ENCODE measurements at regions of chr5 and their contacts with region 1.

Region 1: DNA sequence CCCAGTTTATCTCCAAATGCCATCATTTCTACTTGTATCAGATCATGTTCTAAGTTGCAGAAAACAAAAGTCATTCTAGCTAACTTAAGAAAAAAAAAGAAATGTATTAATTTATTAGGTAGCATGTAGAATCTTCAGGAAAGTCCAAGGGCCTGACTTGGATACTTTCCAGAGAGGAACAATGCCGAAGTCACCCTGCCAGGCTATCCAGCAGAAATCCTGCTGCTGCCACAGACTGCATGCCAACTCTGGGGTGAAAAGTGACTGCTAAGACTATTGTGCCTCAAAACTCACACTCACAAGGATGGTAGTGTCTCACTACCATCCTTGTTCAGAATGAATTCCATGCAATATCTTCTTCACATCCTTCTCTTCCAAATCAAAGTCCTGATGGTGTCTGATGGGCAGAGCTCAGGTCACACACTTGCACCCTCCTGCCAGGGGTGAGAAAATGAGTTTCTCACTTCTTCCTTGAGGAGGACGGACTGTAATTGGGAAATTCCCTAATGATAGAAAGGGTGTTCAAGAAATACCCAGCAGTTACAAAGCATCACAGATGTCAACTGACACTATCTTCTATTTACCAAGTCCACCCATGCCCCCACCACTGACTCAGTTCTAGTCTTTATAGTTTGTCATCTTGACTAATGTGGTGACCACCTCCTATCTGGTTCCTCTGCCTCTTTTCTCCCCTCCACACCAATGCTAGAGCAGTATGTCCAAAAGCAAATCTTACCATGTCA is 279.4 kb downstream of the CWC27 start:
- DNase-seq: peak; percentile 71
- ATAC-seq: peak; percentile 86
- H3K4me3 ChIP-seq: no peak overlapping the region; the same call in 1 of the 2 replicates
- H3K27ac ChIP-seq: peak overlapping the region; percentile 87
- H3K4me1 ChIP-seq: peaks cover 60% of the 10 kb centered on the region
- H3K27me3 ChIP-seq: no peaks in the 10 kb centered on the region
- CTCF ChIP-seq: no peak
- EP300 ChIP-seq: peak in 1 of 2 experiments; percentile 54; a peak in 1 of 4 replicates
- POLR2A ChIP-seq: no peak
- RAD21 ChIP-seq: 0 out of 2 replicates have a peak, but pooled peaks have one; percentile 1

Region 2: GRCh38 chr5:65021527-65022226 is 26.4 kb before region 1 on chr5:
- CTCF ChIA-PET with region 1: interaction called, 5 read pairs
- POLR2A ChIA-PET with region 1: interaction called, 9 read pairs
- RAD21 ChIA-PET with region 1: interaction called, 10 read pairs
- SMC1A ChIA-PET with region 1: interaction called, 16 read pairs
- in situ Hi-C with region 1: no loop called
- intact Hi-C with region 1: no loop called
- DNase-seq: peak; percentile 41
- ATAC-seq: peak; percentile 87
- H3K4me3 ChIP-seq: no peak overlapping the region
- H3K27ac ChIP-seq: peak overlapping the region; percentile 57
- H3K4me1 ChIP-seq: peaks cover 25% of the 10 kb centered on the region
- H3K27me3 ChIP-seq: no peaks in the 10 kb centered on the region
- CTCF ChIP-seq: no peak
- EP300 ChIP-seq: peak in 1 of 2 experiments; percentile 12; a peak in 1 of 4 replicates
- POLR2A ChIP-seq: no peak
- RAD21 ChIP-seq: no peak

Region 3: GRCh38 chr5:65061250-65061973 is 13.3 kb after region 1 on chr5:
- CTCF ChIA-PET with region 1: interaction called, 22 read pairs
- POLR2A ChIA-PET with region 1: interaction called, 49 read pairs
- RAD21 ChIA-PET with region 1: interaction called, 123 read pairs
- SMC1A ChIA-PET with region 1: interaction called, 614 read pairs
- in situ Hi-C with region 1: no loop called
- intact Hi-C with region 1: loop called (anchors 1 kb)
- DNase-seq: peak; percentile 77
- ATAC-seq: peak; percentile 71
- H3K4me3 ChIP-seq: peak overlapping the region; percentile 41; the same call in 1 of the 2 replicates
- H3K27ac ChIP-seq: peak overlapping the region; percentile 95
- H3K4me1 ChIP-seq: peaks cover 60% of the 10 kb centered on the region
- H3K27me3 ChIP-seq: no peaks in the 10 kb centered on the region
- CTCF ChIP-seq: no peak
- EP300 ChIP-seq: peak in 1 of 2 experiments; percentile 59; a peak in 1 of 4 replicates
- POLR2A ChIP-seq: peak; percentile 29; the same call in 1 of the 2 replicates
- RAD21 ChIP-seq: peak; percentile 34; the same call in 1 of the 2 replicates

Region 4: DNA sequence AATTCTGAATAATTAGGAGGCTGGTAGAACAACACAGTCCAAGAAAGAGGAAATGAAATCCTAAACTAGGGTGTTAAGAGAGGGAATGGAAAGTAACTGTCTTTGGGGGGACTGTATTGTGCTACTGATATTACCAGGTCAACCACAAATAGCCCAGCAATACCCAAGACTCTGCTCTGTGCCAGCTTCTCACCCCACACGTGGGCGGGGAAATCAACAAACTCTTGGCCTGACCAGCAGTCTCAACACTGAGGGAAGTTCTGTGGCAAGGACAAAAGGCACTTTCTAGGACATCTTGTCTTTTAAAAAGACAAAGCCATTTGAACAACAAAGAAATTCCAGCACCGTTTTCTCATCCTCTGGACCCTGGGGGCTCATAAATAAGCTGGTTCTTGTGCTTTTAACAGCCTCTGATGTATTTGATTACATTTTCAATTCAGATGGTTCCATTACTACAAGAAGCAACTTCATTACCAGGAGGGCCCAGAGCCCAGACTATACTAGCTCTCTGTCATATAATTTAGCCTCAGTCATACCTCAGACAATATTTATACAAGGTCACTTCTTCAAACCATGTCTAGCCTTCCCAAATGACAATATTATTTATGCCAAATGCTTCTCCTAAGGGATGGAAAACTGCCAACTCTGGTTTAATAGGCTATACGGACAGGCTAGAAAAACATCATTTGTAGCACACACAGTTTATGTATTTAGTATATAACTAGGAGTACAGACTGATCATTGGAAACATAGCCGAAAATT is 18.4 kb after region 1 on chr5:
- CTCF ChIA-PET with region 1: interaction called, 16 read pairs
- POLR2A ChIA-PET with region 1: interaction called, 49 read pairs
- RAD21 ChIA-PET with region 1: interaction called, 123 read pairs
- SMC1A ChIA-PET with region 1: interaction called, 614 read pairs
- in situ Hi-C with region 1: no loop called
- intact Hi-C with region 1: loop called (anchors 1 kb)
- DNase-seq: peak; percentile 92
- ATAC-seq: peak; percentile 77
- H3K4me3 ChIP-seq: no peak overlapping the region
- H3K27ac ChIP-seq: peak overlapping the region; percentile 77
- H3K4me1 ChIP-seq: peaks cover 64% of the 10 kb centered on the region
- H3K27me3 ChIP-seq: no peaks in the 10 kb centered on the region
- CTCF ChIP-seq: no peak
- EP300 ChIP-seq: peak; percentile 78 to 92
- POLR2A ChIP-seq: no peak
- RAD21 ChIP-seq: no peak

Region 5: GRCh38 chr5:65076251-65076869 is 28.2 kb after region 1 on chr5:
- CTCF ChIA-PET with region 1: interaction called, 16 read pairs
- POLR2A ChIA-PET with region 1: interaction called, 37 read pairs
- RAD21 ChIA-PET with region 1: interaction called, 123 read pairs
- SMC1A ChIA-PET with region 1: interaction called, 614 read pairs
- in situ Hi-C with region 1: no loop called
- intact Hi-C with region 1: no loop called
- DNase-seq: no peak
- ATAC-seq: peak; percentile 93
- H3K4me3 ChIP-seq: no peak overlapping the region
- H3K27ac ChIP-seq: no peak overlapping the region
- H3K4me1 ChIP-seq: peaks cover 17% of the 10 kb centered on the region
- H3K27me3 ChIP-seq: no peaks in the 10 kb centered on the region
- CTCF ChIP-seq: peak; percentile 35 to 54 (median 43)
- EP300 ChIP-seq: no peak
- POLR2A ChIP-seq: no peak
- RAD21 ChIP-seq: peak; percentile 66

Region 6: DNA sequence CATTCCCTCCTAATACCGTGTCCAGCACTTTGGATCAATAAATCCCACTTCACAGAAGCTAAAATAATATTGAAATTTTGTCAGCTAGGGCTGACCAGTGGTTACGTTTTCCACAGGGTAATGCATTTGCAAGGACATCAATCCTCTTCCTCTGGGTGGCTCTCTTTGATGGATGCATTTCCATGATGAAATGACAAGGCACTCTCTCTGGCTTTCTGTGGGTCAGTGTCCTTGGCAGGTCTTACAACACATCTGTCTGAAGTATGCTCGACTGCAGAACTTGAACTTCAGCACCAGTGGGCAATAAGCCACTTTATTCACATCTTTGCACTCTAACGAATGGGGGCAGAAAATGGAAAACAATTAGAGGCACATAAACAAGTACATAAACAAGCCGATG is 103.5 kb after region 1 on chr5:
- CTCF ChIA-PET with region 1: no interaction called
- POLR2A ChIA-PET with region 1: no interaction called
- RAD21 ChIA-PET with region 1: no interaction called
- SMC1A ChIA-PET with region 1: no interaction called
- in situ Hi-C with region 1: no loop called
- intact Hi-C with region 1: no loop called
- DNase-seq: no peak
- ATAC-seq: no peak
- H3K4me3 ChIP-seq: no peak overlapping the region
- H3K27ac ChIP-seq: no peak overlapping the region
- H3K4me1 ChIP-seq: no peaks in the 10 kb centered on the region
- H3K27me3 ChIP-seq: no peaks in the 10 kb centered on the region
- CTCF ChIP-seq: no peak
- EP300 ChIP-seq: no peak
- POLR2A ChIP-seq: no peak
- RAD21 ChIP-seq: no peak